GM10248 (cell line): ENCODE measurements at regions of chr12 and their contacts with region 1.

Region 1: DNA sequence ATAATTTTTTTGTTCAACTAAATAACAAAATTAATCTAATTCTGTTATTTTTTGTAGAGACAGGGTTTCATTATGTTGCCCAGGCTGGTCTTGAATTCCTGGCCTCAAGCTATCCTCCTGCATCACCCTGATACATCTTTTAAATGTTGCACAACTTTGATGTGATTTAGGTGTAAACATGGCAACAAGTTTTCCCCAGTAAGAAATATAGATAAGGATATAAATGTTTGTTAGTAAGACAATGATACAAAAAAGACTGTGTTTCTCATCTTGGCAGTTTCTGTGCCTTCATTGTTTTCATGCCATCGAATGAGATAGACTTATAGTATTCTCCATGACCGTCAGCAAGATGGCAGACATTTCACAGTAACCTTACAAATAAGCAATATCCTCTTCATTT is 44.5 kb upstream of the OSBPL8 start:
- DNase-seq: no peak
- CTCF ChIP-seq: no peak

Region 2: DNA sequence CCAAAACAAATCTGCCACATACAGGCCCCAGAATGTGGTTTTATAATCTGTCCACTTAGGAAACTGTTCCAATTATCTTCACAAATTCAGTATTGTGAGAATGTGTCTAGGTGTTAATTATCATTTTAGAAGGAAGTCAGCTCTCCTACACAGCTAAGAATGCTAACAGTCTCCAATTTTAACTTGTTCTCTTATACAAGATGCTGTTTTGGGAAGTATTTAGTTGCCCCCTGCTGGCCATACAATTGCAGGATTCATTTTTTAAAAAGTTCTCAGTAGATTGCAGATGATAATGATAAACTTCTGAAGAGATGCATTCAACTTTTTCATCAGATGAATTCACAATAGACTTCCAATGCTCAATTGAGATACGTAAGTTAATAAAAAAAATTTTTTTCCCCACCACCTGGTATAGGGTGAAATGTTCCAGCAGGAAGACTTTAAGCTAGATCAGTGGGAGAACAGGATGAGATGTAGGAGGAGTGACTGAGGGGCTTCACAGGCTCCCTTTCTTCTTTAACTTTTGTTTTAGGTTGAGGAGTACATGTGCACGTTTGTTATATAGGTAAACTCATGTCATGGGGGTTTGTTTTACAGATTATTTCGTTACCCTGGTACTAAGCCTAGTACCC is 17.2 kb before region 1 on chr12:
- CTCF ChIA-PET with region 1: interaction called, 15 read pairs
- POLR2A ChIA-PET with region 1: no interaction called
- DNase-seq: peak; percentile 20
- CTCF ChIP-seq: peak; percentile 68

Region 3: DNA sequence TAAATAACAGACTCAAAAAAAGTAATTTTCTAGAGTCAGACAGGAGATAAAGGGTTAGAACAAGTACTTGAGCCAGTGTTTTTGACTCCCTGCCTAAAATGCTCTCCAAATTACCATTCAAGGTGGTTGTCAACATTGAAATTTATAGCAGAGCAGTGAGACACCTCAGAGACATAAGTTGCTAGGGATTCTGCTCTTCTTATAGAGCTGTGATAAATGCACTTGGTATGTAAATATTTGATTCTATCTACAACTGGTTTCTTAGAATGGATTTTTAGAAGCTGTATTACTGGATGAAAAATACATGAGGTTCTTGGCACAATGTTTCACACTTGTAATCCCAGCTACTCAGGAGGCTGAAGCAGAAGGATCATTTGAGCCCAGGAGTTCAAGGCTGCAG is 39.3 kb after region 1 on chr12:
- CTCF ChIA-PET with region 1: no interaction called
- POLR2A ChIA-PET with region 1: no interaction called
- DNase-seq: no peak
- CTCF ChIP-seq: no peak